ENCODE measurements at regions of chr7 and their contacts with region 1.

Region 1: GRCh38 chr7:112422842-112423496 is 27.3 kb upstream of the IFRD1 start:
- DNase-seq: peak; percentile 84
- H3K4me3 ChIP-seq: no peak overlapping the region
- H3K27ac ChIP-seq: peak overlapping the region; percentile 48
- H3K27me3 ChIP-seq: no peaks in the 10 kb centered on the region
- CTCF ChIP-seq: no peak

Region 2: DNA sequence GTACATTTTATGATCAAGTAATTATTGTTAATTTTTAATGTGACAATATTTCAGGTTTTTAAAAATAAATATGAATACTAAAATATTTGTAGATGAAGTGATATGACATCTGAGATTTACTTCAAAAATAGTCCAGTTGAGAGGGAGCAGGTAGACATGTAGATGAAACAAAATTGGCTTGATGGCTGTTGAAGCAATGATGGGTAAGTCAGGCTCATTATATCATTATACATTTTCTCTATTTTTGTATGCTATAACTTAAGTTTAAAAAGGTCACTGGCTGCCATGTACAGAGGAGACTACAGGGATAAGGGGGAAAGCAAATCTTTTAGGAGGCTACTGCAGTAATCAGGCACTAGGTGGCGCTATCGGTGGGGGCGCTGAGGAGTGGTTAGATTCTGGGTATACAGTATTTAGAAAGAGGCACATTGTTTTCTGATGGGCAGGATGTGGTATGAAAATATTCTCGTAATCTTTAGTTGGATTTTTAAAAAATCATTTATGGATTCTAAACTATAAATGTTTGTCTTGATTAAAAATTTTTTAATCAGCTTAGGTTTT is 670.9 kb before region 1 on chr7:
- in situ Hi-C with region 1: loop called (anchors 25 kb)
- DNase-seq: no peak
- H3K4me3 ChIP-seq: no peak overlapping the region
- H3K27ac ChIP-seq: no peak overlapping the region
- H3K27me3 ChIP-seq: no peaks in the 10 kb centered on the region
- CTCF ChIP-seq: peak; percentile 98

Region 3: GRCh38 chr7:112692333-112692732 is 269.4 kb after region 1 on chr7:
- in situ Hi-C with region 1: no loop called
- DNase-seq: no peak
- H3K4me3 ChIP-seq: no peak overlapping the region
- H3K27ac ChIP-seq: no peak overlapping the region
- H3K27me3 ChIP-seq: no peaks in the 10 kb centered on the region
- CTCF ChIP-seq: no peak

Measured in brain microvascular endothelial cell (primary cell).